Naive thymus-derived CD4-positive, alpha-beta T cell (primary cell): ENCODE measurements at regions of chr2 and their contacts with region 1.

Region 1: GRCh38 chr2:233990261-233990798 is 60.2 kb upstream of the SPP2 start:
- DNase-seq: peak in 8 of 9 donors; percentile 35 to 85 (median 76)
- ATAC-seq: peak; percentile 92
- H3K4me3 ChIP-seq: peak overlapping the region; percentile 21
- H3K4me3 Mint-ChIP-seq: peak overlapping the region; percentile 40 to 80 (median 69)
- H3K27ac ChIP-seq: no peak overlapping the region
- H3K27ac Mint-ChIP-seq: peak overlapping the region; percentile 64 to 93 (median 84)
- H3K4me1 ChIP-seq: peaks cover 31 to 37% of the 10 kb centered on the region in 2 donors
- H3K4me1 Mint-ChIP-seq: peaks cover 33 to 68% (median 55%) of the 10 kb centered on the region in 7 donors
- H3K27me3 ChIP-seq: no peaks in the 10 kb centered on the region
- H3K27me3 Mint-ChIP-seq: peaks cover 0 to 34% (median 0%) of the 10 kb centered on the region in 5 donors

Region 2: DNA sequence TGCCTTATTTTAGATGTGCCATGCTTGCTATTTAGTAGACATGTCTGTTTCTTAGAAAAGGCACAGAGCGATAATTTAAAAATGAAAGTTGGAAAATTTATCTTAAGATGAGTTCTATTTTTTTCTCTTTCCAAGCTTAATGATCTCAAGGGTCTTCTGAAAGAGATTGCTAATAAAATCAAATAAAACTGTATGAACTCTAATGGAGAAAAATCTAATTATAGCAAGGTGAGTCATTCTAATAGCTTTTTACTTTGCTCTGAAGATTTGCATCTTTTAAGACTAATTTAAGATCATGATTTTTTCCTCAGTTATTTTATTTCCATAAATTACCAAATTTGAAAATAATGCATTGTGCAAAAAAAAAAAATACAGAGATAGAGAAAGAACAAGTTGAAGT is 24.1 kb after region 1 on chr2:
- CTCF ChIA-PET with region 1: no interaction called
- POLR2A ChIA-PET with region 1: interaction called, 3 read pairs
- intact Hi-C with region 1: loop called in 1 of 2 experiments (anchors 2 kb)
- DNase-seq: no peak
- ATAC-seq: no peak
- H3K4me3 ChIP-seq: no peak overlapping the region
- H3K4me3 Mint-ChIP-seq: no peak overlapping the region
- H3K27ac ChIP-seq: no peak overlapping the region
- H3K27ac Mint-ChIP-seq: no peak overlapping the region
- H3K4me1 ChIP-seq: no peaks in the 10 kb centered on the region
- H3K4me1 Mint-ChIP-seq: peaks cover 0 to 9% (median 0%) of the 10 kb centered on the region in 7 donors
- H3K27me3 ChIP-seq: no peaks in the 10 kb centered on the region
- H3K27me3 Mint-ChIP-seq: peaks cover 0 to 58% (median 0%) of the 10 kb centered on the region in 5 donors

Region 3: DNA sequence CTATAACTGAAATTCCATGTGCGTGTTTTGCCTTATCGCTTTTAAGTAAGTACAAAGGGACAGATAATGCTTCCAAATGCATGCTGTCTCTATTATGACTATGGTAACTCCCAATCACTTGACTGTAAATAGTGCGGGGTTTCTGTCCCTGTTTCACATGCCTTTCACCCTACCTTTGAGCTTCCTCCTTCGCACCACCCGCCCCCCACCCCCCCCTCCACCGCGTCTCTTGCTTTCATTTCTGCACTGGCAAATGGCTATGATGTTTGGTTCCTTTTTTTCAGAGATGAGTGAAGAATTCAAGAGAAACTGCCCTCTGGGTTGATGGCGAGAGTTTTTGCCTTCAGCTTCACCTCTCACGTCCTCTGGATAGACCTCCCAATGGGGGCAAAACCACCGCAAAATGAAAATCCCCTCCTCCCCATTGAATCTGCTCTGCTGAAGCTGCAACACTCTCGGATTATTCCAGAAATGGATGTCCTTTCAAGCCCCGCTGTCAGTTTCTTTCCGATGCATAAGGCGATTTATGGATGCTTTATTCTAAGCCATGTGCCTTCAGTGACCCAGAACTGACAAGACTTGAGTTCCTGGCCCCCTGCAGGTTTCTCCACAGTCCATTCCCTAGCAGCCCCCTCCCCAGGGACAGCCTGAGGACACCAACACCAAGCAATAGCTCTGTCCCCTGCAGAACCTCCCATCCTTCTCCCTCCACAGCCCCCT is 35.3 kb after region 1 on chr2:
- CTCF ChIA-PET with region 1: no interaction called
- POLR2A ChIA-PET with region 1: no interaction called
- intact Hi-C with region 1: loop called in 1 of 2 experiments (anchors 2 kb)
- DNase-seq: peak in 7 of 9 donors; percentile 18 to 50 (median 30)
- ATAC-seq: peak; percentile 80
- H3K4me3 ChIP-seq: peak overlapping the region; percentile 56
- H3K4me3 Mint-ChIP-seq: peak overlapping the region; percentile 69 to 89 (median 85)
- H3K27ac ChIP-seq: no peak overlapping the region
- H3K27ac Mint-ChIP-seq: peak overlapping the region; percentile 66 to 92 (median 78)
- H3K4me1 ChIP-seq: peaks cover 27 to 54% of the 10 kb centered on the region in 2 donors
- H3K4me1 Mint-ChIP-seq: peaks cover 27 to 49% (median 43%) of the 10 kb centered on the region in 7 donors
- H3K27me3 ChIP-seq: no peaks in the 10 kb centered on the region
- H3K27me3 Mint-ChIP-seq: peaks cover 0 to 32% (median 0%) of the 10 kb centered on the region in 5 donors

Region 4: DNA sequence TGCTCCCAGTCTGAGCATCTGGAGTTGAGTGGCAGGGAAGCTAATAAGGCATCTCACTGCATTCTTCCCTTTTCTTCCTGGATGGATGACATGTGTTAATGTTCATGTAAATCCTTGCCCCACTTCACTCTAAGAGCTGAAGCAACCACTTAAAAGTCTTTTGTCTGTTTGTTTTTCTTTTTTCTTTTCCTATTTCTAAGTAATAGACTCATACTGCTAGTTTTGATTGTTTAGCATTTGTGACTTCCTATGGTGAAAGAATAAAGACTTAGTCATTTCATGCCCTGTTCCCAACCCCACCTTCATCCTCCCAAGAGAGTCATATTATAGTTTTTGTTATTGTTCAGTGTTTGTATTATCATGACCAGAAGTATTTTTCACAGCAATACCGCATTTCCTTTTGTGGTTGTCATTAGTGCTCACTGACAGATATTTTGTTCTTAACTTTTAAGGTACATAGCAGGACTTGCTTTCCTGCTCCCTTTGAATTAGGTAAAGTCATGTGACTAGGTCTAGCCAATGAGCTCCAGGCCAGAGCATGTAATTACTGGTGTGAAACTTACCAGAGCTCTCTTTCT is 42.0 kb after region 1 on chr2:
- CTCF ChIA-PET with region 1: no interaction called
- POLR2A ChIA-PET with region 1: no interaction called
- intact Hi-C with region 1: loop called in 1 of 2 experiments (anchors 1 kb)
- DNase-seq: peak in 4 of 9 donors; percentile 16 to 40 (median 33)
- ATAC-seq: peak; percentile 82
- H3K4me3 ChIP-seq: no peak overlapping the region
- H3K4me3 Mint-ChIP-seq: peak overlapping the region in 5 of 10 donors; percentile 4 to 54 (median 39)
- H3K27ac ChIP-seq: no peak overlapping the region
- H3K27ac Mint-ChIP-seq: peak overlapping the region in 7 of 9 donors; percentile 1 to 72 (median 15)
- H3K4me1 ChIP-seq: peaks cover 13 to 55% of the 10 kb centered on the region in 2 donors
- H3K4me1 Mint-ChIP-seq: peaks cover 19 to 42% (median 20%) of the 10 kb centered on the region in 7 donors
- H3K27me3 ChIP-seq: no peaks in the 10 kb centered on the region
- H3K27me3 Mint-ChIP-seq: peaks cover 0 to 43% (median 0%) of the 10 kb centered on the region in 5 donors

Region 5: GRCh38 chr2:234102112-234102511 is 111.8 kb after region 1 on chr2:
- CTCF ChIA-PET with region 1: interaction called, 4 read pairs
- POLR2A ChIA-PET with region 1: interaction called, 3 read pairs
- intact Hi-C with region 1: loop called (anchors 1 to 5 kb)
- DNase-seq: peak in 7 of 9 donors; percentile 16 to 64 (median 47)
- ATAC-seq: peak; percentile 73
- H3K4me3 ChIP-seq: no peak overlapping the region
- H3K4me3 Mint-ChIP-seq: peak overlapping the region in 8 of 10 donors; percentile 4 to 64 (median 28)
- H3K27ac ChIP-seq: no peak overlapping the region
- H3K27ac Mint-ChIP-seq: peak overlapping the region in 3 of 9 donors; percentile 9 to 64 (median 43)
- H3K4me1 ChIP-seq: peaks cover 36 to 37% of the 10 kb centered on the region in 2 donors
- H3K4me1 Mint-ChIP-seq: peaks cover 25 to 55% (median 43%) of the 10 kb centered on the region in 7 donors
- H3K27me3 ChIP-seq: no peaks in the 10 kb centered on the region
- H3K27me3 Mint-ChIP-seq: peaks cover 0 to 30% (median 0%) of the 10 kb centered on the region in 5 donors

Region 6: DNA sequence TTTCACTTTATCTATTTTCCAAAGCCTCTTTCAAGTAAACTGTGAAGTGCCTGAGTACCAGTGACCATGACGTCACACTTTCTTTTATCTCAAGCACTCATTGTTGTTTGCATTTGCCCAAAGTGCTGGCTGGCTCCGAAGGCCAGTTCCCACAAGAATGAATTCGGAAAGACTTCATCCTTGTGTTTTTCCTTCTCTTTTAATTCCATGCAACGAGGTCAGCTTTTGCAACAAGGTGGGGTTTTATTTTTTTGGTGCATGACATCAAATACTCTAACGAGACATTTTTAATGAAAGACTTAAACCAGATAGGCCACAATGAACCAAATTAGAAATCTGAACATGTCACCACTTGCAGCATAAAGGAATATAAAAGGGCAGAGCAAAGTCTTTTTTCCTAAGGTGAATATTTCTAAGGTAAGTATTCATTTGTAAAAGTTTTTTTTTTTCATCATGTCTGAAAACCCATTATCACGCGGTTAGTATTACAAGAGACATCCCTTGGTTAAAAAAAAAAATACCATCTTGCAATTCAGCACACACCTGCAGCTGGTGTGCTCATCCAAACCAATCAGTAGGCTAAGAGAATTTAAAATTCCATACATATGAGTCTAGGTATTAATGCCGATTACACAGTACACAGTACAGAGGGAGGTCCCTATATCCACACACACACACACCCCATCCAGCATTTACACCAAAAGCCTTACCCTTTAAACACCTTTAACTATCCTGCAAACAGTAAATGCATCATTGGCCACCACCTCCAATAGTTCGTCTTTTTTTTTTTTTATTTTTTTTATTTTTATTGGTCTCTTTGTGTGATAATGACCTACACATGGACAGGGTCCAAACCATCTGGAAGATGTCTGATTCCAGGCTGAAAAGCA is 504.3 kb after region 1 on chr2:
- CTCF ChIA-PET with region 1: interaction called, 4 read pairs
- POLR2A ChIA-PET with region 1: interaction called, 3 read pairs
- intact Hi-C with region 1: loop called (anchors 1 to 5 kb)
- DNase-seq: peak in 7 of 9 donors; percentile 51 to 67 (median 57)
- ATAC-seq: peak; percentile 14
- H3K4me3 ChIP-seq: peak overlapping the region; percentile 95
- H3K4me3 Mint-ChIP-seq: peak overlapping the region; percentile 96 to 100 (median 98)
- H3K27ac ChIP-seq: peak overlapping the region; percentile 94
- H3K27ac Mint-ChIP-seq: peak overlapping the region; percentile 91 to 100 (median 98)
- H3K4me1 ChIP-seq: peaks cover 34 to 46% of the 10 kb centered on the region in 2 donors
- H3K4me1 Mint-ChIP-seq: peaks cover 26 to 50% (median 43%) of the 10 kb centered on the region in 7 donors
- H3K27me3 ChIP-seq: no peaks in the 10 kb centered on the region
- H3K27me3 Mint-ChIP-seq: peaks cover 0 to 5% (median 0%) of the 10 kb centered on the region in 5 donors